MCF 10A (cell line): ENCODE measurements at regions of chr6 and their contacts with region 1.

Region 1: DNA sequence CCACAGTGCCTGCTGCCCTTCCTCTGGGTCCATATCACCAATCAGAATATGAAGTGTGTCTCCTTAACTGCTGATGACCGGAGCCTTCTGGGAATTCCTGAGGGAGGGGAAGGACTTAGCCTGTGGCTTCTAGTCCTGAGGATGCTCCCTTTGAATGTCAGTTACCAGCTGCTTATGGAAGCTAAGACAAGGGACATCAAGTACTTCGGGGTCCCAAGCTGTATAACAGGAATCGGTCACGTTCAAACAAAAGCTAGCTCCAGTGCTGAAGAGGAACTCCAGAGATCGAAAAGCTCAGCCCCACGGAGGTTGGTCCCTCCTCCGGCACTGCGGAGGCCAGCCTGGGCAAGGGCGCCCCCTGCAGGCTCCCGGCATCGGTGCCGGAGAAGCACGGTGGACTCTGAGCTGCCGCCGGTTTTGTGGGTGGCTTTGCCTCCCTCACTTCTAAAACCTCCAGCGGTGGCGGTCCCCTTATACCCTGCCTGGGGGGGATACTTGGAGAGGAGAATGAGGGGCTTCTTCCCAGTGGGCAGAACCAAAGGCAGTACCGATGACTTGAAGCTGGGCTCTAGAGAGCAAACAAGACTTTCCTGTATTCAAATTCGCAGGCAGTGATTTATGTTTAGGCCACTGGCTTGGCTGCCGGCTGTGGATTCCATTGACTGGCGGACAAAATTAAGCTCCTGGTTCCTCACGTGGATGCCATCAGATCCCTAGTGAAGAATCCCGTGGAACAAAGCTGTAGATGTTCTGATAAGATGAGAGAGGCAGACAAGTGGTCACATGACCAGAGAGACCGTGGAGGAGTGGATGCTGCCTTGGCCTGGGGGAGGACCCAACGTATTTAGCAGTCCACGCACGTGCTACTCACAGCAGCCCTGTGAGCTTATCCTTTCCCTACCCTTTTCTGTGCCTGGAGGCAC is 16.2 kb upstream of the UBR2 start:
- DNase-seq: peak; percentile 75
- H3K4me3 Mint-ChIP-seq: peak overlapping the region; percentile 77
- H3K27ac Mint-ChIP-seq: peak overlapping the region; percentile 84
- H3K4me1 Mint-ChIP-seq: peaks cover 22% of the 10 kb centered on the region
- H3K27me3 Mint-ChIP-seq: no peaks in the 10 kb centered on the region
- CTCF ChIP-seq: peak; percentile 92

Region 2: GRCh38 chr6:42166444-42167141 is 381.1 kb before region 1 on chr6:
- CTCF ChIA-PET with region 1: interaction called, 9 read pairs
- POLR2A ChIA-PET with region 1: no interaction called
- intact Hi-C with region 1: loop called (anchors 1 kb)
- DNase-seq: peak; percentile 85
- H3K4me3 Mint-ChIP-seq: no peak overlapping the region
- H3K27ac Mint-ChIP-seq: peak overlapping the region; percentile 22
- H3K4me1 Mint-ChIP-seq: peaks cover 8% of the 10 kb centered on the region
- H3K27me3 Mint-ChIP-seq: no peaks in the 10 kb centered on the region
- CTCF ChIP-seq: peak; percentile 97

Region 3: GRCh38 chr6:42224222-42224989 is 323.3 kb before region 1 on chr6:
- CTCF ChIA-PET with region 1: interaction called, 19 read pairs
- POLR2A ChIA-PET with region 1: interaction called, 11 read pairs
- intact Hi-C with region 1: no loop called
- DNase-seq: peak; percentile 93
- H3K4me3 Mint-ChIP-seq: peak overlapping the region; percentile 73
- H3K27ac Mint-ChIP-seq: peak overlapping the region; percentile 92
- H3K4me1 Mint-ChIP-seq: peaks cover 44% of the 10 kb centered on the region
- H3K27me3 Mint-ChIP-seq: no peaks in the 10 kb centered on the region
- CTCF ChIP-seq: no peak

Region 4: DNA sequence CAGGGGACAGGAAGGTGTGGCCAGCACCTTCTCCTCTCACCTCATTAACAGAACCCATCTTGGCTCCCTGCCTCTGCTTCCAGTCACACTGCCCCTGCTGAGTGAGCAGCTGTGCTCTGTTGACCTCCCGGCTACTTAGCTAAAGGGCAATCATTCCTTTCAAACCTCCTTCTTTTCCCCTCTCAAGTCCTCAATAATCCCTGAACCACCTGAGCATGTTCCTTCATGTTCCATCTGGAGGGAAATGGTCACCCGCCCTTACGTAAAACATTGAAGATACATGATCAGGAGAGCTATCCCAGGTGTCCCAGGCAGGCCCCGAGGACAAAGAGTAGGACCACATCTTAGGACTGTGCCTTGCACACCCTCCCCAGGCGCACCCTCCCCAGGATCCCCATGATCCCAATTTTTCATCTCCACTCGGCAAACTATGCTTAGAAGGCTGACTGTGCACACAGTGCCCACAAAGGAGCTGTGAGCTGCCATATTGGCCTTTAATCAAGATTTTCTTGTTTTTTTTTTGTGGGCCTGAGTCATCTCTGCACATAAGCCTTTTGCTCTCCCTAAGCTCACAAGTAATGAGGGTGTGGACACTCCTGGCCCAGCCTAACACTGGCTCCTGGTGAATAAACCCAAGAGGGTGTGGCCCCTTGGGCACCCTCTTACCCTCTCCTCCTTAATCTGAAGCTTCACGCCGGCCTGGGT is 308.2 kb before region 1 on chr6:
- CTCF ChIA-PET with region 1: interaction called, 28 read pairs
- POLR2A ChIA-PET with region 1: interaction called, 7 read pairs
- intact Hi-C with region 1: no loop called
- DNase-seq: peak; percentile 85
- H3K4me3 Mint-ChIP-seq: peak overlapping the region; percentile 24
- H3K27ac Mint-ChIP-seq: peak overlapping the region; percentile 89
- H3K4me1 Mint-ChIP-seq: peaks cover 23% of the 10 kb centered on the region
- H3K27me3 Mint-ChIP-seq: no peaks in the 10 kb centered on the region
- CTCF ChIP-seq: no peak

Region 5: GRCh38 chr6:42279144-42279781 is 268.4 kb before region 1 on chr6:
- CTCF ChIA-PET with region 1: interaction called, 11 read pairs
- POLR2A ChIA-PET with region 1: interaction called, 4 read pairs
- intact Hi-C with region 1: no loop called
- DNase-seq: peak; percentile 90
- H3K4me3 Mint-ChIP-seq: peak overlapping the region; percentile 52
- H3K27ac Mint-ChIP-seq: peak overlapping the region; percentile 70
- H3K4me1 Mint-ChIP-seq: peaks cover 34% of the 10 kb centered on the region
- H3K27me3 Mint-ChIP-seq: no peaks in the 10 kb centered on the region
- CTCF ChIP-seq: no peak

Region 6: GRCh38 chr6:42453031-42453653 is 94.5 kb before region 1 on chr6:
- CTCF ChIA-PET with region 1: interaction called, 5 read pairs
- POLR2A ChIA-PET with region 1: interaction called, 3 read pairs
- intact Hi-C with region 1: loop called (anchors 1 kb)
- DNase-seq: peak; percentile 87
- H3K4me3 Mint-ChIP-seq: peak overlapping the region; percentile 91
- H3K27ac Mint-ChIP-seq: no peak overlapping the region
- H3K4me1 Mint-ChIP-seq: peaks cover 32% of the 10 kb centered on the region
- H3K27me3 Mint-ChIP-seq: no peaks in the 10 kb centered on the region
- CTCF ChIP-seq: no peak

Region 7: DNA sequence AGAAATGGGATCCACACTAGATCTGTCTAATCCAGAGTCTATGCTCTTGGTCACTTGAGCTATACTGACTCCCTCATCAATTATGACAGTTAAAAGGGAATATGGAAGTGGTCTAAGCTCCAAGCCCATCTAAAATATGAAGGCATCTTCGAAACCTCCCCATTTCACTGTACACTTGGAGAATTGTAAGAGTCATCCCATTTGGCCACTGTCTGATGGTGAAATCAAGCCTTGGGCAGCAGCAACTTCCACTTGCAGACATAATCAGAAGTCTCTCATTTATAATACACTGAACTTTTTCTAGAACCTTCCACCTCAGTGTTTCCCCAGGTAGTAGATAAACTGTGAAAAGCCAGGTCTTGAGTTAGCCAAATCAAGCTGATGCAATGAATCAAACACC is 10.1 kb before region 1 on chr6:
- CTCF ChIA-PET with region 1: interaction called, 43 read pairs
- POLR2A ChIA-PET with region 1: interaction called, 5 read pairs
- intact Hi-C with region 1: no loop called
- DNase-seq: no peak
- H3K4me3 Mint-ChIP-seq: no peak overlapping the region
- H3K27ac Mint-ChIP-seq: no peak overlapping the region
- H3K4me1 Mint-ChIP-seq: no peaks in the 10 kb centered on the region
- H3K27me3 Mint-ChIP-seq: no peaks in the 10 kb centered on the region
- CTCF ChIP-seq: no peak